Activated naive CD4-positive, alpha-beta T cell treated with anti-CD3 and anti-CD28 coated beads, Interleukin-2, amount 10 ng/mL, durations not matched to agents 7 days and 5 days (primary cell): ENCODE measurements at regions of chr6 and their contacts with region 1.

Region 1: GRCh38 chr6:107114213-107114905 is 956 bp downstream of the BEND3 start:
- DNase-seq: peak; percentile 72
- H3K4me3 Mint-ChIP-seq: peak overlapping the region; percentile 65
- H3K27ac Mint-ChIP-seq: peak overlapping the region; percentile 70
- H3K4me1 Mint-ChIP-seq: peaks cover 19% of the 10 kb centered on the region
- H3K27me3 Mint-ChIP-seq: peaks cover 23% of the 10 kb centered on the region

Region 2: GRCh38 chr6:107026965-107027364 is 87.4 kb before region 1 on chr6:
- CTCF ChIA-PET with region 1: interaction called, 17 read pairs
- DNase-seq: no peak
- H3K4me3 Mint-ChIP-seq: no peak overlapping the region
- H3K27ac Mint-ChIP-seq: peak overlapping the region; percentile 71
- H3K4me1 Mint-ChIP-seq: peaks cover 25% of the 10 kb centered on the region
- H3K27me3 Mint-ChIP-seq: peaks cover 4% of the 10 kb centered on the region